Body of pancreas (tissue), 4 donors: ENCODE measurements at regions of chr3 and their contacts with region 1.

Region 1: DNA sequence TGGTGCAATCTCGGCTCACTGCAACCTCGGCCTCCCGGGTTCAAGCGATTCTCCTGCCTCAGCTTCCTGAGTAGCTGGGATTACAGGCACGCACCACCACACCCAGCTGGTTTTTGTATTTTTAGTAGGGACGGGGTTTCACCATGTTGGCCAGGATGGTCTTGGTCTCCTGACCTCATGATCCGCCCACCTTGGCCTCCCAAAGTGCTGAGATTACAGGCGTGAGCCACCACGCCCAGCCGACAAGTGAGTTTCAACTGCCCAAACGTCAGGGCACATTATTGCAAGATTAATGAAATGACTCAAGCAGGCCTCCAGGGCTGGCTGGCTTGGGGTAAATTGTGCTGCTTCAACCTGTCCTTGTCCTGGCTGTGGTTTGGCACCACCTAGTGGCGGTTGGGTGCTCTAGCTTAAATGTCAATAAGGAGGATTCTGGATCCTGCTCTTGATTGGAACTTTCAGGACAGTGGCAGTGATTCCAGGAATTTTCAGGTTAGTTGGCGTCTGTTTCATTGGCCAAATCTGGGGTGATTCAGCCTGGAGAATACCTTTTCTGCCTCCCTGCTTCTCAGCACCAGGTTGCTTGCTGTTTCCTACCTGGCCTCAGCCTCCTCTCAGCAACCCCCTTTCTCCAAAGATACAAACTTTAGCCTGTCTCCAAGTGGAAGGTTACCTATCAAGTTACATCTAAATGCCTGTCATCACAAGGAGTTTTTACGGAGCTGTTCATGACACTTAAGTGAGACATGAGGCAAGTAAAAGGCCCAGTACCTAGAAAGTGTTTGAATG is 32.4 kb upstream of the SACM1L start:
- DNase-seq: peak; percentile 89 to 95 (median 94)
- ATAC-seq: peak; percentile 88
- H3K4me3 ChIP-seq: no peak overlapping the region
- H3K27ac ChIP-seq: peak overlapping the region in 2 of 4 donors; percentile 3 to 29
- H3K4me1 ChIP-seq: peaks cover 4% of the 10 kb centered on the region
- H3K27me3 ChIP-seq: no peaks in the 10 kb centered on the region
- CTCF ChIP-seq: peak; percentile 88 to 99 (median 98)
- POLR2A ChIP-seq: no peak

Region 2: GRCh38 chr3:45509768-45510129 is 147.0 kb before region 1 on chr3:
- intact Hi-C with region 1: loop called (anchors 5 kb)
- DNase-seq: no peak
- ATAC-seq: no peak
- H3K4me3 ChIP-seq: no peak overlapping the region
- H3K27ac ChIP-seq: no peak overlapping the region
- H3K4me1 ChIP-seq: peaks cover 11% of the 10 kb centered on the region
- H3K27me3 ChIP-seq: no peaks in the 10 kb centered on the region
- CTCF ChIP-seq: no peak
- POLR2A ChIP-seq: no peak

Region 3: GRCh38 chr3:46517016-46517793 is 860.4 kb after region 1 on chr3:
- intact Hi-C with region 1: no loop called
- DNase-seq: no peak
- ATAC-seq: no peak
- H3K4me3 ChIP-seq: no peak overlapping the region
- H3K27ac ChIP-seq: no peak overlapping the region
- H3K4me1 ChIP-seq: no peaks in the 10 kb centered on the region
- H3K27me3 ChIP-seq: no peaks in the 10 kb centered on the region
- CTCF ChIP-seq: no peak
- POLR2A ChIP-seq: no peak